HEK293 (cell line): ENCODE measurements at regions of chr17 and their contacts with region 1.

Region 1: DNA sequence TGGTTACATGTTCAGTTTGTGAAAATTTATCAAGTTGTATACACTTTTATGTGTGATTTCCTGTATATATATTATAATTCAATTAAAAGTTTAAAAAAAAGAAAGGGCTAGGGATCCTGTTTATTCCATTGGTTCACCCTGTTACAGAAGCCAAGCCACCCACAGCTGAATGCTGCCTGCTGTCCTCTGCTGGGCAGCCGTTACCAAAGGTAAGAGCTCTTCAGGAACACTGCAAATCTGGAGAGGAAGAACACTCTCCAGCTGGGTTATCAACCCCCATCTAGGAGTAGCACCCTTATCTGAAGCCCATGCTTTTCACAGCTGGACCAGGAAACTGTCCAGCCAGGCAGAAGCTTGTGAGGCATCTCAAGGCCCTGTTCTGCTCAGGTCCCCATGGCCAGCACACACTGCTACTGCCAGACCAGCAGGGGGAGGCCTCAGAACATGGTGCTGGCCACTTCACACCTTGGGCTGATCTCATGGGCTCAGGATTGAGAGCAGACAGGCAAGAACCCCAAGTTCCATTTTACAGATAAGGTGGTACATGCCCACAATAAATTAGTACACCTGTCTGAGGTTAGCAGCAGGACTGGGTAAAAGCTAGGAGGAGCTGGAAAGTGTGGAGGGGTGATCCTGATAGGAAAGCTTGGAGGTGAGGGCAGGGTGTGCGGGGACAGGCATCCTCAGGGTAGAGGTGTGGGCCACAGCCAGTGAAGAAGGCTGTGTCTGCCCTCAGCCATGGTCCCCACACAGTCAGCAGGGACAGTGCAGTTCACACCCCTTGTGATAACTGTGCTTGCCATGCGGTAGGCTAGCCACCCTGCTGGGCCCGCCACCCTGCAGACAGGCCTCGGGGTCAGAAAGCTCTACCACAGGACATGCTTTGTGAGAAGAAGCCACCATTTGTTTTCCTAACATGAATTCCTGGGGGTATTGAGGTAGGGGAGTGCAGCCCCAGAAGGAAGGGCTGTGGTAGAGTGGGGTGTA is 54.3 kb upstream of the SREBF1 start:
- H3K4me3 ChIP-seq: no peak overlapping the region
- H3K27ac ChIP-seq: no peak overlapping the region
- H3K4me1 ChIP-seq: no peaks in the 10 kb centered on the region
- CTCF ChIP-seq: peak; percentile 93

Region 2: DNA sequence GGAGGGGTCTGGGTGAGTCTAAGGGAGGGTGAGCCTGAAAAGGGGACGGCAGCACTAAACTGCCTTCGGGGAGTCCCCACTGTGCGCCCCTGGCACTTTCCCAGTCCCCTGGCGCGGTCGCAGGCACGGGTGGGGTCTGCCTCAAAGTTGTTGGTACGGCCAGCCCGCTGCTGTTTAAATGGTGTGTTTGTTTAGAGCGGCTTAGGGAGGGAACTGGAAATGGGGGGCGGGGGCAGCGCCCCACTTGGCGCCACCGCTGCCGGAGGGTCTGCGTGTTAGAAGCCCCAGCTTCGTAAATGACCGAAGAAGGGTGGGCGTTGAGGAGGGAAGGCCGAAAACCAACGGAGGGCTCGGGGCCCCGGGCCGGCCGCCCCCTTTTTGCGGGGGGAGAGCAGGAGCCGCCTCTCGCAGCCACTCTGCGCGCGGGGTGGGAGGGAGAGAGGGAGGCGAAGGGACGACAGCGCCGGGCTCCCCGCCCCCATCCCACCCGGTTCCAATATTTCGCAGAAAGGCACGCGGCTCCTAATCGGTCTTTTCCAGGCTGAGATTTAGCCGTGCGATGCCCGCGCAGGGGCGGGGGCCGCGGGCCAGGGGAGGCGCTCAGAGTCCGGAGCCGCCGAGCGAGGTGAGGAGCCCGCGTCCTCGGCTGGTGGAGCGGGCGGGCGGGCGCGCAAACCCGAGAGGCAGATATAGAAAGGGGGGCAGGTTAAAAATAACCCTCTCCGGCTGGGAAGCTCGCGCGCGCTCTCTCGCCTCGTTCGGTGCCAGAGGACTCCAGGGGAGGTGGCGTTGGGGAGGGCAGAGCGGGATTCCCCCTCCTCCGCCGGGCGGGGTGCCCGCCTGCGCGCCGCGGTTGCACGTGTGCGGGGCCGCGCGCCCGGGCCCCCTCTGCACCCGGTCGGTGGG is 109.2 kb before region 1 on chr17:
- CTCF ChIA-PET with region 1: no interaction called
- POLR2A ChIA-PET with region 1: no interaction called
- H3K4me3 ChIP-seq: peak overlapping the region; percentile 12
- H3K27ac ChIP-seq: peak overlapping the region; percentile 97
- H3K4me1 ChIP-seq: peaks cover 39% of the 10 kb centered on the region
- CTCF ChIP-seq: no peak

Region 3: GRCh38 chr17:17877529-17878358 is 13.3 kb before region 1 on chr17:
- CTCF ChIA-PET with region 1: interaction called, 21 read pairs
- POLR2A ChIA-PET with region 1: no interaction called
- H3K4me3 ChIP-seq: no peak overlapping the region
- H3K27ac ChIP-seq: peak overlapping the region; percentile 93
- H3K4me1 ChIP-seq: peaks cover 17% of the 10 kb centered on the region
- CTCF ChIP-seq: peak; percentile 34; the same call in 1 of the 2 replicates

Region 4: DNA sequence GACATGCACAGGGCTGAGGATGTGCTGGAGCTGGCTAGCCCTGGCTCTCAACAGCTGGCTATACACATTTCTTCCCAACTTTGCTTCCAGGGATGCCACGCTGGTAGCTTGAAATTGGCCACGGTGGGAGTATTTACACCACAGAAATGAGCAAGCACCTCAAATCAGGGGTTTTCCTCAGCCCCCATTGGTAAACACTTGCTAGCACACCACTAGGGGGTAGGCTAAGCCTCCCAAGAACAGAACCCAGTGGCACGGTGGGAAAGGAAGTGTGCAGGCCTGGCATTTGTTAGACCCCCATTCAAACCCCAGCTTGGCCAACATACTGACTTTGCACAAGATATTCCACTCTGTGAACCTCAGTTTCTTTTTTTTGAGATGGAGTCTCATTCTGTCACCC is 94.5 kb after region 1 on chr17:
- CTCF ChIA-PET with region 1: interaction called, 10 read pairs
- POLR2A ChIA-PET with region 1: no interaction called
- H3K4me3 ChIP-seq: no peak overlapping the region
- H3K27ac ChIP-seq: no peak overlapping the region
- H3K4me1 ChIP-seq: no peaks in the 10 kb centered on the region
- CTCF ChIP-seq: no peak

Region 5: DNA sequence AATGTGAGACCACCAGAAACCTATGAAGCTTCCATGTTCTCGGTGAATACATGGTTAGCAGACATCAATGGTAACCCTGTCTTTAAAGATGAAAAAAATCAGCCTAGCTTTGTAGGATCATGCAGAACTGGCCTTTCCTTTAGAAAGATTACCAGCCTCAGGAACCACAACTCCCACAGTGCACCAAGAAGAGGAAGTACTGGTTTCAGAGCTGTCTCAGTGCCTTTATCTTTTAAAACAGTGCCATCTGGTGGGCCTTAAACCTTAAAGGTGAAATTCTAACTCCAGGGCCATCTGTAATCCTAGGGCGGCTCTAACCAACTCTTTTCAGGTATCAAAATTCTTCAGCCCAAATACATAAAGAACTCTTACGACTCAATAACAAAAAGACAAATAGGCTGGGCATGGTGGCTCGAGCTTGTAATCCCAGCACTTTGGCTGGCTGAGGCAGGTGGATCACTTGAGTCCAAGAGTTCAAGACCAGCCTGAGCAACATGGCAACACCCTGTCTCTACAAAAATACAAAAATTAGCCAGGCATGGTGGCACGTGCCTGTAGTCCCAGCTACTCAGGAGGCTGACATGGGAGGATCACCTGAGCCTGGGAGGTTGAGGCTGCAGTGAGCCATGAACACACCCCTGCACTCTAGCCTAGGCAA is 142.5 kb after region 1 on chr17:
- CTCF ChIA-PET with region 1: interaction called, 74 read pairs
- POLR2A ChIA-PET with region 1: no interaction called
- H3K4me3 ChIP-seq: no peak overlapping the region
- H3K27ac ChIP-seq: no peak overlapping the region
- H3K4me1 ChIP-seq: no peaks in the 10 kb centered on the region; the same call in 1 of the 2 replicates
- CTCF ChIP-seq: peak; percentile 65; the same call in 1 of the 2 replicates